Right ventricle myocardium superior (tissue), 1 donor: ENCODE measurements at regions of chr13 and their contacts with region 1.

Region 1: DNA sequence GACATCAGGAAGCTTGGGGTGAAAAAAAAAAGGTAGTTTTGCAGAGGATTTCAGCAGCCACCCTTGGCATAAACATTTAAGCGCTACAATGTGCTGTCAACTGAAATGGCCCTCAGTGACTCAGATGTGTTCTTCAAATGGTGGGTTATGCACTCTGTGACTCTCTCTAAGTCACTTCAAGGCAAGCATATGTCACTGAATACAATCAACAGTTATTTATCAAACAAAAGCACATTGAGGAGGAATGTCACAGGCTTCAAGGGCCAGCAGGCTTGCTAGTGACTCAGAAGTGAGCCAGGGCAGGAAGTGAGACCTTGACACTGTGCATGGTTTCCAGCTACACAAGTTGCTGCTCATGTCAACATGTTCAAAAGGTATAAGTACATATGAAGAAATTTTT is 523.7 kb upstream of the HTR2A start:
- DNase-seq: no peak
- ATAC-seq: peak; percentile 62

Region 2: GRCh38 chr13:47598340-47598911 is 177.9 kb after region 1 on chr13:
- intact Hi-C with region 1: loop called (anchors 2 kb)
- DNase-seq: no peak
- ATAC-seq: no peak